Upper lobe of right lung (tissue), 1 donor: ENCODE measurements at regions of chr14 and their contacts with region 1.

Region 1: GRCh38 chr14:74608959-74609611 is 3.0 kb downstream of the LTBP2 start:
- DNase-seq: peak; percentile 78
- ATAC-seq: peak; percentile 77
- H3K4me3 ChIP-seq: peak overlapping the region; percentile 67
- H3K27ac ChIP-seq: no peak overlapping the region
- H3K4me1 ChIP-seq: no peaks in the 10 kb centered on the region
- H3K27me3 ChIP-seq: peaks cover 15% of the 10 kb centered on the region
- CTCF ChIP-seq: peak; percentile 99

Region 2: GRCh38 chr14:74501135-74501614 is 107.9 kb before region 1 on chr14:
- intact Hi-C with region 1: loop called (anchors 10 kb)
- DNase-seq: peak; percentile 87
- ATAC-seq: peak; percentile 77
- H3K4me3 ChIP-seq: no peak overlapping the region
- H3K27ac ChIP-seq: no peak overlapping the region
- H3K4me1 ChIP-seq: no peaks in the 10 kb centered on the region
- H3K27me3 ChIP-seq: no peaks in the 10 kb centered on the region
- CTCF ChIP-seq: peak; percentile 67

Region 3: GRCh38 chr14:74682169-74682952 is 73.3 kb after region 1 on chr14:
- intact Hi-C with region 1: no loop called
- DNase-seq: no peak
- ATAC-seq: no peak
- H3K4me3 ChIP-seq: no peak overlapping the region
- H3K27ac ChIP-seq: no peak overlapping the region
- H3K4me1 ChIP-seq: no peaks in the 10 kb centered on the region
- H3K27me3 ChIP-seq: no peaks in the 10 kb centered on the region
- CTCF ChIP-seq: no peak

Region 4: GRCh38 chr14:74712499-74713394 is 103.7 kb after region 1 on chr14 and contains the starts of genes AREL1 and FCF1:
- intact Hi-C with region 1: no loop called
- DNase-seq: peak; percentile 81
- ATAC-seq: peak; percentile 99
- H3K4me3 ChIP-seq: peak within 1 kb of the TSS; percentile 72
- H3K27ac ChIP-seq: peak within 1 kb of the TSS; percentile 77
- H3K4me1 ChIP-seq: peaks cover 30% of the 10 kb centered on the region
- H3K27me3 ChIP-seq: no peaks in the 10 kb centered on the region
- CTCF ChIP-seq: no peak
- total RNA-seq, gene AREL1: 36.8 TPM
- total RNA-seq, gene FCF1: 40.7 TPM